GM12878 (cell line): ENCODE measurements at regions of chr14 and their contacts with region 1.

Region 1: GRCh38 chr14:77862154-77862786 is 62.4 kb downstream of the ADCK1 start:
- DNase-seq: peak; percentile 12
- ATAC-seq: peak; percentile 95
- H3K4me3 ChIP-seq: no peak overlapping the region
- H3K27ac ChIP-seq: no peak overlapping the region
- H3K4me1 ChIP-seq: no peaks in the 10 kb centered on the region
- H3K27me3 ChIP-seq: no peaks in the 10 kb centered on the region
- CTCF ChIP-seq: peak; percentile 89 to 99 (median 99)
- EP300 ChIP-seq: no peak
- POLR2A ChIP-seq: no peak
- RAD21 ChIP-seq: peak; percentile 90

Region 2: GRCh38 chr14:77738559-77739250 is 123.6 kb before region 1 on chr14:
- CTCF ChIA-PET with region 1: no interaction called
- POLR2A ChIA-PET with region 1: no interaction called
- RAD21 ChIA-PET with region 1: no interaction called
- SMC1A ChIA-PET with region 1: no interaction called
- in situ Hi-C with region 1: no loop called
- intact Hi-C with region 1: no loop called
- DNase-seq: no peak
- ATAC-seq: no peak
- H3K4me3 ChIP-seq: no peak overlapping the region
- H3K27ac ChIP-seq: no peak overlapping the region
- H3K4me1 ChIP-seq: no peaks in the 10 kb centered on the region
- H3K27me3 ChIP-seq: no peaks in the 10 kb centered on the region
- CTCF ChIP-seq: no peak
- EP300 ChIP-seq: no peak
- POLR2A ChIP-seq: no peak
- RAD21 ChIP-seq: no peak

Region 3: DNA sequence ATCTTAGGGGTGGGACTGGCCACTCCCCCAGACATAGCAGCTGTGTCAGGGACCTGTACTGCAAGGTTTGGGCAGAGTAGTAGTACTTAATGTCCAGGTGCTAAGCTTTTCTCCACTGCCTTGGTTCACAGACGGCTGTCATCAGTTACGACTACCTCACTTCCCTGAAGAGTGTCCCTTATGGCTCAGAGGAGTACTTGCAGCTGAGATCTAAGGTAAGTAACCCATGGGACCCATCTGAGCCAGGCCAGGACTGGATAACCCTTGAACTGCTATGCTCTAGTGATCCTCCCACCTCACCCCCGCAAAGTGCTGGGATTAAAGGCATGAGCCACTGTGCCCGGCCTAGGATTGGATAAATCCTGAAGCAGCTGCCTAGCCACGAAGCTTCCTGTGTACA is 40.0 kb before region 1 on chr14:
- CTCF ChIA-PET with region 1: no interaction called
- POLR2A ChIA-PET with region 1: no interaction called
- RAD21 ChIA-PET with region 1: no interaction called
- SMC1A ChIA-PET with region 1: no interaction called
- in situ Hi-C with region 1: no loop called
- intact Hi-C with region 1: no loop called
- DNase-seq: no peak
- ATAC-seq: no peak; the same call in 2 of the 3 replicates
- H3K4me3 ChIP-seq: no peak overlapping the region
- H3K27ac ChIP-seq: no peak overlapping the region
- H3K4me1 ChIP-seq: no peaks in the 10 kb centered on the region
- H3K27me3 ChIP-seq: no peaks in the 10 kb centered on the region
- CTCF ChIP-seq: no peak
- EP300 ChIP-seq: no peak
- POLR2A ChIP-seq: no peak
- RAD21 ChIP-seq: no peak

Region 4: DNA sequence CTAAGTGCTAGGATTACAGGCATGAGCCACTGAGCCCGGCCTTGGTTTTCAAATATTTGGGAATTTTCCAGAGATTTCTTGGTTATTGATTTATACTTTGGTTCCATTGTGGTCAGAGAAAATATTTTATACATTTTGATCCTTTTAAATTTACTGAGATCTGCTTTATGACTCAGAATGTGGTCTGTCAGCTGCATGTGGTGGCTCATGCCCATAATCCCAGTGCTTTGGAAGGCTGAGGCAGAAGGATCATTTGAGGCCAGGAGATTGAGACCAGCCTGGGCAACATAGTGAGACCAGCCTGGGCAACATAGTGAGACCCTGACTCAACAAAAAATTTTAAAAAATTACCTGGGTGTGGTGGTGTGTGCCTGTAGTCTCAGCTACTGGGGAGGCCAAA is 12.6 kb before region 1 on chr14:
- CTCF ChIA-PET with region 1: interaction called, 13 read pairs
- POLR2A ChIA-PET with region 1: no interaction called
- RAD21 ChIA-PET with region 1: interaction called, 3 read pairs
- SMC1A ChIA-PET with region 1: interaction called, 3 read pairs
- in situ Hi-C with region 1: no loop called
- intact Hi-C with region 1: no loop called
- DNase-seq: no peak
- ATAC-seq: no peak
- H3K4me3 ChIP-seq: no peak overlapping the region
- H3K27ac ChIP-seq: no peak overlapping the region
- H3K4me1 ChIP-seq: no peaks in the 10 kb centered on the region
- H3K27me3 ChIP-seq: no peaks in the 10 kb centered on the region
- CTCF ChIP-seq: no peak
- EP300 ChIP-seq: no peak
- POLR2A ChIP-seq: no peak
- RAD21 ChIP-seq: no peak

Region 5: GRCh38 chr14:77980475-77981321 is 118.4 kb after region 1 on chr14:
- CTCF ChIA-PET with region 1: no interaction called
- POLR2A ChIA-PET with region 1: no interaction called
- RAD21 ChIA-PET with region 1: no interaction called
- SMC1A ChIA-PET with region 1: no interaction called
- in situ Hi-C with region 1: no loop called
- intact Hi-C with region 1: loop called (anchors 10 kb)
- DNase-seq: no peak
- ATAC-seq: no peak
- H3K4me3 ChIP-seq: no peak overlapping the region
- H3K27ac ChIP-seq: no peak overlapping the region
- H3K4me1 ChIP-seq: no peaks in the 10 kb centered on the region
- H3K27me3 ChIP-seq: no peaks in the 10 kb centered on the region; a peak in 1 of 4 replicates
- CTCF ChIP-seq: no peak
- EP300 ChIP-seq: no peak
- POLR2A ChIP-seq: no peak
- RAD21 ChIP-seq: no peak

Region 6: DNA sequence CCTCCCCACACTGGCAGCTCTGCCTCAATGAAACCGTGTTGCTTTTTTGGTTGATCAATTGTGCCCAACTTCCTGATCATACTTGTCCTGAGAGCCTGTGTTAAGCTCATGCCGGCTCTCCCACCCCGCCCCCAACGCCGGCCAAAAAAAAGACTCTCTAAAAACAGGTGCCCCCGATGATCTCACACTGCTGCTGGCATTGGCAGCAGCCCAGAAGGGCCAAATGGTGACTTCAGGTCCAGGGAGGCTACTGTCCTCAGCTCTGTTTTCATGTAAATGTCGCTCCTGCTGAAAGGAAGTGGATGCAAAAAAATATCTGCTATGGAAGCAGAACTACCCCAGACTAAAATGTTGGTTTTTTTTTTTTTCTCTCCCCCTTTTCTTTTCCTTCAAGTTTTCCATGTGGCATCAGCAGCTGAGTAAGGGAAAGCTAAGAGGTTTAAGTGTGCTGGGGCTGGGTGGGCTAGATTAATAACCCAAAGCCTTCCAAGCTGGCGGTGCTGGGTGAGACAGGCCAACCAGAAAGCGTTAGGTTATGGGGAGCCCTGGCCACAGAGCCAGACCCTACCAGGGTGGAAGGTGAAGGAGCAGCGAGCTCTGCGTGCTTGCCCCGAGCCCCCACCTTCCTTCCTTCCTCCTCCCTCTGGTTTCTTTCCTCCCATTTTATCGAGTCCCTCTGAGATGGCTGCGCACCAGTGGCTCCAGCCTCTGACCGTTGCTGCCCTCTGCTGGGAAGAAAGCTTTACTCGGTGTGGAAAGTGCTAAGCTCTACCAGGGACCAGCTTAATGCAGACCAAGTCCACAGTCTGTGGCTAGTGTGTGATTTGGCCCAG is 704.0 kb after region 1 on chr14:
- CTCF ChIA-PET with region 1: interaction called, 40 read pairs
- POLR2A ChIA-PET with region 1: no interaction called
- RAD21 ChIA-PET with region 1: interaction called, 11 read pairs
- SMC1A ChIA-PET with region 1: interaction called, 7 read pairs
- in situ Hi-C with region 1: no loop called
- intact Hi-C with region 1: loop called (anchors 1 kb)
- DNase-seq: peak; percentile 25
- ATAC-seq: peak; percentile 100
- H3K4me3 ChIP-seq: no peak overlapping the region
- H3K27ac ChIP-seq: no peak overlapping the region
- H3K4me1 ChIP-seq: no peaks in the 10 kb centered on the region
- H3K27me3 ChIP-seq: no peaks in the 10 kb centered on the region
- CTCF ChIP-seq: peak; percentile 77 to 84 (median 84)
- EP300 ChIP-seq: no peak
- POLR2A ChIP-seq: no peak
- RAD21 ChIP-seq: peak; percentile 88

Region 7: GRCh38 chr14:78697341-78697740 is 835.1 kb after region 1 on chr14:
- CTCF ChIA-PET with region 1: no interaction called
- POLR2A ChIA-PET with region 1: no interaction called
- RAD21 ChIA-PET with region 1: no interaction called
- SMC1A ChIA-PET with region 1: no interaction called
- in situ Hi-C with region 1: no loop called
- intact Hi-C with region 1: loop called (anchors 2 kb)
- DNase-seq: no peak
- ATAC-seq: peak; percentile 67
- H3K4me3 ChIP-seq: no peak overlapping the region
- H3K27ac ChIP-seq: no peak overlapping the region
- H3K4me1 ChIP-seq: no peaks in the 10 kb centered on the region
- H3K27me3 ChIP-seq: no peaks in the 10 kb centered on the region
- CTCF ChIP-seq: peak; percentile 47 to 53 (median 52)
- EP300 ChIP-seq: no peak
- POLR2A ChIP-seq: no peak
- RAD21 ChIP-seq: peak; percentile 65